Dendritic cell treated with granulocyte-macrophage colony-stimulating factor and Interleukin-4, amounts not matched to agents 40 ng/mL and 50 ng/mL, for 4 days (primary cell): ENCODE measurements at regions of chr7 and their contacts with region 1.

Region 1: GRCh38 chr7:37820708-37821468 is 27.5 kb upstream of the NME8 start:
- H3K4me3 Mint-ChIP-seq: no peak overlapping the region
- H3K27ac Mint-ChIP-seq: no peak overlapping the region
- H3K4me1 Mint-ChIP-seq: peaks cover 14% of the 10 kb centered on the region
- H3K27me3 Mint-ChIP-seq: no peaks in the 10 kb centered on the region

Region 2: GRCh38 chr7:37765872-37766525 is 54.9 kb before region 1 on chr7:
- intact Hi-C with region 1: loop called (anchors 10 kb)
- H3K4me3 Mint-ChIP-seq: peak overlapping the region; percentile 30
- H3K27ac Mint-ChIP-seq: peak overlapping the region; percentile 89
- H3K4me1 Mint-ChIP-seq: peaks cover 56% of the 10 kb centered on the region
- H3K27me3 Mint-ChIP-seq: no peaks in the 10 kb centered on the region